Lower leg skin (tissue), 4 donors: ENCODE measurements at regions of chr17 and their contacts with region 1.

Region 1: GRCh38 chr17:78112518-78113226 is 15.9 kb downstream of the TMC6 start:
- DNase-seq: peak in 1 of 2 donors; percentile 96
- H3K4me3 ChIP-seq: no peak overlapping the region
- CTCF ChIP-seq: peak in 1 of 3 donors; percentile 80
- POLR2A ChIP-seq: no peak

Region 2: GRCh38 chr17:78179372-78179771 is 66.7 kb after region 1 on chr17:
- intact Hi-C with region 1: loop called (anchors 2 kb)
- DNase-seq: no peak
- H3K4me3 ChIP-seq: no peak overlapping the region
- CTCF ChIP-seq: no peak
- POLR2A ChIP-seq: no peak

Region 3: DNA sequence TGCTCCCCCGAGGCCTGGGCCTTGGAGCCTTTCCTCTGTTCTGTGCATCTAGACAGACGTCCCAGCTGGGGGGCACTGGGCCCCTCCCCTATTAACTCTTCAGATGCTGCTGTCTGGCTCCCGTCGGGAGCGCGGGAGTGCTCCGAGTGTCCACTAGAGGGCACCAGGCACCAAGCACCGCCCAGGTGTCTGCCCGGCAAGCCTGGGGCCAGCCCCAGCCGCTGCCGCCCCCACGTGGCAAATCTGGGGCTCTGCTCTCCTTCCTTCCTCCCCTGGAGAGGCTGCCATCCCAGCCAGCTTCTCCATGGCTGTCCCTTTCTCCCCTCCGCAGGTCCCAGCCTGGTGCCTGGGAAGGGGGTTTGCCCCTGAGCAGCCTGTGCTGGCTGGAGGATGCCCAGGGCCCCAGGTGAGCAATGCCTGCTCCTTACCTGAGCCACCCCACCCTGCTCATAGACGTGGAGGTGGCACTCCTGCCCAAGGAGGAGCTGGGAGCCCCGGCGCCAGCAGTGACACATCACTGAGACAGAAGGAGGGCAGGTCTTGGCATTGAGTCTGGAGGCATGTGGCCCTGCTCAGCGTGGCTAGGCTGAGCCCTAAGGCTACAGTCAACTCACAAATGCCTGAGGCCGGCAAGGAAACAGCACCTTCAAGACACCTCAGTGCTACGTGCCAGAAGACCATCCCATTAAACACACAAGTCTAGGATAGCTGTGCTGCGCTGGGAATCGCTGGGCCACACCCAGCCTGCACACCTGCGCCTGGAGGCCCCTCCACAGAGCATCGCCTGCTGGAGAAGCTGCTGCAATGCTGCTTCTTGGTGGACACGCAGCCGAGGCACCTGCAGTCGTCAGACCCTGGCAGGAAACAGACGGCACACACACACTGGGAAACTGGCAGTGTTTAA is 138.5 kb after region 1 on chr17:
- intact Hi-C with region 1: loop called (anchors 5 kb)
- DNase-seq: peak; percentile 63 to 95
- H3K4me3 ChIP-seq: no peak overlapping the region
- CTCF ChIP-seq: peak in 1 of 3 donors; percentile 99
- POLR2A ChIP-seq: no peak